ENCODE measurements at regions of chr16 and their contacts with region 1.

Region 1: DNA sequence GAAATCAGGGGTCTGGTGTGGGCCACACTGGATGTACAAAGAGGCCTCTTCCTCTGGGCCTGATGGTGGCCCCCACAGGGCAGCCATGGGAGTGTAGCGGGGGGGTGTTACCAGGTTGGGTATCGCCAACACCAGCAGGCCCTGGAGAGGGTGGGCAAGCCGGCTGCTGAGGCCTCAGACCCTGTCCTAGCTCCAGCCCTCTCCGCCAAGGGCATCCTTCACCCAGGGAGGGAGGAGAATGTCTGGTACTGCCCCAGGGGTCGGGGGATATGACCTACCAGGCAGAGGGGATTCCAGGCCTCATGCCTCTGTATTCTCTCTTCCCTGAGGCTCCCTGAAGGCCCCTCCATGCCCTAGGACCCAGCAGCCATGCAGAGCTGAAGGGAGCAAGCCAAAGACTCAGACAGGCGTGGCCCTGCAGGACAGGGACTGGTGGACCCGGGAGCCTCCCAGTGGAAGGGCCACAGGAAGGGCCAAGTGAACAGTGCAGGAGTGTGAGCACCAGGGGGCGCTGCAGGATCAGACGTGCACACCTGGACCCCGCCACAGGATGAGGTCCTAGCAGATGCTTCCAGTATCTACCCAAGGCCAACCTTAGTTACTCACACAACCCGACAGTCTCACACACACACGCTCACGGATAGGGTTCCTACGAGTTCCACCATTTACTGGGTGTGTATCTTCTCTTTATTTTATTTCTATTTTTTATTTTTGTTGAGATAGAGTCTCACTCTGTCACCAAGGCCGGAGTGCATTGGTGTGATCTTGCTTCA is 10.9 kb upstream of the CES4A start:
- DNase-seq: peak; percentile 69
- H3K4me3 ChIP-seq: no peak overlapping the region
- H3K27ac ChIP-seq: no peak overlapping the region
- H3K4me1 ChIP-seq: peaks cover 10% of the 10 kb centered on the region
- H3K27me3 ChIP-seq: no peaks in the 10 kb centered on the region
- CTCF ChIP-seq: peak; percentile 91 to 98

Region 2: DNA sequence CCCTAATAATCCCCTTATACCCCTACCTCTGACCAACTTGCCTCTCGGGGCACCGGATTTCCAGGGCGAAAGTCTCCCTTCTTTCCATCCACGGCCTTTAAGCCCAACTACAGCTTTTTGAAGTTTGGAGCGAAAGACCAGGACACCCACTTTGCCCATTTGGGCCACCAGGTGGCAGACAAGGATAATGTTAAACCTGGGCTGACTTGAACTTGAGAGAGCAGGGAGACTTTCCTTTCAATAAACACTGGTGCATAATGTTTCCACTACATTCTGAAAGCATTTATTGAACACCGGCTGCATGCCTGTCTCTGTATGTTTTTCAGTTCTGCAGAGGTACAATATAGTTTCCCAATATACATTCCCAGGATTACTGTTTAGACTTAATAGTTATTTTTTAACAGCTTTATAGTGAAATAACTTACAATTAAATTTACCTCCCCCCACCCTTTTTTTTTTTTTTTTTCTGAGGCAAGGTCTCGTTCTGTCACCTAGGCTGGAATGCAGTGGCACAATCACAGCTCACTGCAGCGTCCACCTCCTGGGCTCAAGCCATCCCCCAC is 23.3 kb before region 1 on chr16:
- CTCF ChIA-PET with region 1: no interaction called
- dilution Hi-C with region 1: no loop called
- in situ Hi-C with region 1: no loop called
- intact Hi-C with region 1: loop called (anchors 1 kb)
- DNase-seq: peak; percentile 68
- H3K4me3 ChIP-seq: no peak overlapping the region
- H3K27ac ChIP-seq: no peak overlapping the region
- H3K4me1 ChIP-seq: peaks cover 16% of the 10 kb centered on the region
- H3K27me3 ChIP-seq: no peaks in the 10 kb centered on the region
- CTCF ChIP-seq: peak; percentile 83 to 86

Region 3: DNA sequence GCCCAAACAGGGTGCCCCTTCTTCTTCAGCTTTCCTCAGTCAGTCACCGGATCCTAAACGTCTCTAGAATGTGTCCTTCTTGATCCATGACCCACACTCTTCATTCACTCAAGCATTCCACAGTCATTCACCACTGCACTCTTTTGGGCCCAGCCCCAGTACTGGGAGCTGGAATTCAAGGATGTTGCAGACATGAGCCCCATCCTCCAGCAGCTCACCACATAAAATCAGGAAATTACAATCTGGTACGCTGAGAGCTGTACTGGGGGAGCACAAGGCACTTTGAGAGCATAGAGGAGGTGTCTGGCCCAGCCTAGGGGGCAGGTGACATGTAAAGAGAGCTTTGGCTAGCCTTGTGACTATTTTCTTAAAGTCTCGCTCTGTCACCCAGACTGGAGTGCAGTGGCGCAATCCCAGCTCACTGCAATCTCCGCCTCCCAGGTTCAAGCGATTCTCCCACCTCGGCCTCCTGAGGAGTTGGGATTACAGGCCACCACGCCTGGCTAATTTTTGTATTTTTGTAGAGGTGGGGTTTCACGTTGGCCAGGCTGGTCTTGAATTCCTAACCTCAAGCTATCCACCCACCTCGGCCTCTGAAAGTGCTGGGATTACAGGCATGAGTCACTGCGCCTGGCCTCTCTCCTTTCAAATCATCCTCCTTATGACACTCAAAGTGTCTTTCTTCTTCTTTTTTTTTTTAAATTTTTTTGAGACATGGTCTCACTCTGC is 29.6 kb after region 1 on chr16:
- CTCF ChIA-PET with region 1: no interaction called
- dilution Hi-C with region 1: no loop called
- in situ Hi-C with region 1: no loop called
- intact Hi-C with region 1: no loop called
- DNase-seq: no peak
- H3K4me3 ChIP-seq: no peak overlapping the region
- H3K27ac ChIP-seq: no peak overlapping the region
- H3K4me1 ChIP-seq: peaks cover 7% of the 10 kb centered on the region
- H3K27me3 ChIP-seq: no peaks in the 10 kb centered on the region
- CTCF ChIP-seq: no peak

Region 4: GRCh38 chr16:67040906-67041305 is 63.4 kb after region 1 on chr16:
- CTCF ChIA-PET with region 1: no interaction called
- dilution Hi-C with region 1: loop called (anchors 5 kb)
- in situ Hi-C with region 1: no loop called
- intact Hi-C with region 1: no loop called
- DNase-seq: no peak
- H3K4me3 ChIP-seq: no peak overlapping the region
- H3K27ac ChIP-seq: no peak overlapping the region
- H3K4me1 ChIP-seq: no peaks in the 10 kb centered on the region
- H3K27me3 ChIP-seq: no peaks in the 10 kb centered on the region
- CTCF ChIP-seq: no peak

Region 5: DNA sequence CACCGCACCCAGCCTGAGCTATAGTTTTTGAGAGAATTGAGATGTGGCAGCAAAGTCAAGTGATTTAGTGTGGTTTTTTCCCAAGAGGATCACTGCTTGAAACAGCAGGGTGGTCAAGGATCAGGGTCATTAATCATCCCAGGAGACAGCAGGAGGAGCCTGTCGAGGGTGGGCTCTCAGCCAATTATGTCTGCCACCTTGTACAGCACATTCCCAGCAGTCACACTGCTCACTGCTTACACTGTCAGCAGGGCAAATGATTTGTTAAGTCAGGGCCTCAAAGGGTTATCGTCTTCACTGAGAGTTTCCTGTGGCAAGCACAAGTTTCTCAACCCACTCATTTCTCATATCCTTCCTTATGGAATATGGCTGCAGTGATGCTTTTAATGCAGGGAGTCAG is 160.1 kb after region 1 on chr16:
- CTCF ChIA-PET with region 1: no interaction called
- dilution Hi-C with region 1: loop called (anchors 5 kb)
- in situ Hi-C with region 1: no loop called
- intact Hi-C with region 1: no loop called
- DNase-seq: no peak
- H3K4me3 ChIP-seq: no peak overlapping the region
- H3K27ac ChIP-seq: no peak overlapping the region
- H3K4me1 ChIP-seq: no peaks in the 10 kb centered on the region
- H3K27me3 ChIP-seq: no peaks in the 10 kb centered on the region
- CTCF ChIP-seq: no peak

Region 6: GRCh38 chr16:67183627-67184328 is 206.3 kb after region 1 on chr16 and contains the start of gene MATCAP1:
- CTCF ChIA-PET with region 1: no interaction called
- dilution Hi-C with region 1: no loop called
- in situ Hi-C with region 1: no loop called
- intact Hi-C with region 1: loop called (anchors 1 kb)
- DNase-seq: peak; percentile 97
- H3K4me3 ChIP-seq: peak within 1 kb of the TSS; percentile 43 to 82 (median 69)
- H3K27ac ChIP-seq: peak within 1 kb of the TSS; percentile 76
- H3K4me1 ChIP-seq: peaks cover 49% of the 10 kb centered on the region
- H3K27me3 ChIP-seq: no peaks in the 10 kb centered on the region
- CTCF ChIP-seq: no peak
- total RNA-seq, gene MATCAP1: 8.0 to 24.9 TPM

Measured in mammary epithelial cell (primary cell).